GM13977 (cell line): ENCODE measurements at regions of chr17 and their contacts with region 1.

Region 1: GRCh38 chr17:82160075-82160474 is 52.6 kb downstream of the CCDC57 start:
- DNase-seq: no peak
- CTCF ChIP-seq: no peak

Region 2: GRCh38 chr17:82037113-82037888 is 122.8 kb before region 1 on chr17 and contains the start of gene DCXR:
- in situ Hi-C with region 1: loop called (anchors 10 kb)
- DNase-seq: peak; percentile 98
- CTCF ChIP-seq: peak; percentile 91

Region 3: GRCh38 chr17:82236142-82236981 is 76.3 kb after region 1 on chr17:
- in situ Hi-C with region 1: no loop called
- DNase-seq: peak; percentile 77
- CTCF ChIP-seq: peak; percentile 86